Activated T-helper 1 cell treated with anti-CD3 and anti-CD28 coated beads, Interleukin-12 subunit alpha, Interleukin-12 subunit beta, Interleukin-2, Interleukin-4 antibody, amounts not matched to agents 30 ng/mL and 10 ng/mL and 1 ng/mL, durations not matched to agents 14 hours and 24 hours and 36 hours (primary cell): ENCODE measurements at regions of chr12 and their contacts with region 1.

Region 1: DNA sequence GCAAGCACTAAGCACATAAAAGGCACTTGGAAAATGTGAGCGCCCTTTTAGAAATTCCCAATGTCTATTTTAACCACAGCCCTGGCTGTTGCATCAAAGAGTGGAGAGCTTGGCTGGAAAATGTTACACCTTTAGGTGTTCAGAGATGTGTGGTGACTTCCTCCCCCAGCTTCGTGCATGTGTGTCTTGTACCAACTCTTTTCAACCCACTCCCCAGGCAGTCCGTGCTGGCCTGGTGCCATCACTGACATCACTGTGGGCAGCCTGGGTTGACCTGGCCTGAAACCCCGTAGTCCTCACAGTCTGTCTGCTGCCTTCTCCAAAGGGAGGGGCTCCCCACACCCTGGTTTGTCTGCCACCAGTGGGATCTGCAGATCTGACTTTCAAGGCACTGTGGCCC is 101.8 kb downstream of the SCARB1 start:
- DNase-seq: no peak
- H3K4me3 Mint-ChIP-seq: no peak overlapping the region
- H3K27ac Mint-ChIP-seq: peak overlapping the region; percentile 29
- H3K4me1 Mint-ChIP-seq: peaks cover 30% of the 10 kb centered on the region
- H3K27me3 Mint-ChIP-seq: peaks cover 2% of the 10 kb centered on the region

Region 2: GRCh38 chr12:124740691-124741137 is 21.2 kb before region 1 on chr12:
- intact Hi-C with region 1: loop called (anchors 2 kb)
- DNase-seq: no peak
- H3K4me3 Mint-ChIP-seq: peak overlapping the region; percentile 17
- H3K27ac Mint-ChIP-seq: no peak overlapping the region
- H3K4me1 Mint-ChIP-seq: peaks cover 16% of the 10 kb centered on the region
- H3K27me3 Mint-ChIP-seq: peaks cover 5% of the 10 kb centered on the region